Activated CD4-positive, alpha-beta memory T cell treated with anti-CD3 and anti-CD28 coated beads for 36 hours (primary cell): ENCODE measurements at regions of chr20 and their contacts with region 1.

Region 1: GRCh38 chr20:34302723-34303528 is at the start of gene AHCY:
- DNase-seq: peak; percentile 97
- H3K4me3 Mint-ChIP-seq: peak within 1 kb of the TSS; percentile 89
- H3K27ac Mint-ChIP-seq: peak within 1 kb of the TSS; percentile 84
- H3K4me1 Mint-ChIP-seq: peaks cover 22% of the 10 kb centered on the region
- H3K27me3 Mint-ChIP-seq: no peaks in the 10 kb centered on the region
- total RNA-seq, gene AHCY: 160 to 163 TPM

Region 2: GRCh38 chr20:34111702-34112599 is 191.0 kb before region 1 on chr20 and contains the start of gene EIF2S2:
- CTCF ChIA-PET with region 1: no interaction called
- POLR2A ChIA-PET with region 1: interaction called, 5 read pairs
- intact Hi-C with region 1: loop called (anchors 2 kb)
- DNase-seq: peak; percentile 97
- H3K4me3 Mint-ChIP-seq: peak within 1 kb of the TSS; percentile 97
- H3K27ac Mint-ChIP-seq: peak within 1 kb of the TSS; percentile 98
- H3K4me1 Mint-ChIP-seq: peaks cover 41% of the 10 kb centered on the region
- H3K27me3 Mint-ChIP-seq: no peaks in the 10 kb centered on the region
- total RNA-seq, gene EIF2S2: 151 to 155 TPM

Region 3: DNA sequence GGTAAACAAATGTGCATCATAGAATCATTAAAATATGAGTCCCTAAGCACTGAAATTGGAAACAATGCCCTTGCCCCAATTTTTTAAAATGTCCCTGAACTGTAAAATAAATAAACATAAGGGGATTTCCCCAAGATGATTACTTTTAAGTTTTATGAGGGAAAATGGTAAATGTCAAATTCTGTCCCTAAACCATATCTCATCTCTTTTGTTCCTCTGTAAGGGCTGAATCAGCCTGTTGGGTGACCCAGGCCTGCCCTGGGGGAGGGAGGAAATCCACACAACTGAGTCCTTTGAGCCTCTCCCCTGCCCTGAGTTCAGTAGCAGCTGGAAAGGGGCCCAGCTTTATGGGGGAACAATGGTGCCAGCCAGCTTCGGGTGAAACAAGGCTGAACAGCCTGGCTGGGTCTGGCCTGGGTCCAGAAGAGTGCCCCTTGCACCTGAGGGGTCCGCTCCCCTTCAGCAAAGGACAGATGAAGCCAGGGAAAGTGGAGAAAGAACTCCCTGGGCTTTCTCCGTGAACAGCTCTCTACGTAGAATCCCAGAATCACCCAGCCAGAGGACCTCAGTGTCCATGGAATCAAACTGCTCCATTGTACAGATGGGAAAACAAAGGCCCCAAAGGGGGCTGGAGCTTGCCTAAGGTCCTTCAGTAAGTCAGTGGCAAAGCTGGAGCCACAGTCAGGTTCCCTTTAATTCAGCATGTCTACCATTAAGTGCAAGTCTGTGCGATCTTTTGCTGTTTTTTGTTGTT is 31.9 kb after region 1 on chr20:
- CTCF ChIA-PET with region 1: no interaction called
- POLR2A ChIA-PET with region 1: no interaction called
- intact Hi-C with region 1: no loop called
- DNase-seq: no peak
- H3K4me3 Mint-ChIP-seq: no peak overlapping the region
- H3K27ac Mint-ChIP-seq: no peak overlapping the region
- H3K4me1 Mint-ChIP-seq: no peaks in the 10 kb centered on the region
- H3K27me3 Mint-ChIP-seq: no peaks in the 10 kb centered on the region

Region 4: DNA sequence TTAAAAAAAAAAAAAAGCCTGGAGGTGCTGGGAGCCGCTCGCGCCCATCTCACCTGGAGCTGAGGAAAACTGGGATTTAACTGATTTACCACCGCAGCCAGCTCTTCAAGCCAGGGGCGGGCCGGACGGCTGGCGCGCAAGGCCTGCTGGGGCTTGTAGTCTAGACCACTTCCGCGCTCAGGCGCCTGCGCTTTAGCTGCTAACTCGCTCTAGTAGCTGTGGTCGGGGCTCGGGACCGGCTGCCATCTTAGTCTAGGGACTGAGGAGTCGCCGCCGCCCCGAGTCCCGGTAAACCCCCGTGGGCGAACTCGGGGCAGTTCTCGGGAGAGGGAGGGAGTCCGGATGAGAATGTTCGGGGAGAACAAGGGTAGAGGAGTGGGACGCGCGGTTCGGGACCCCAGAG is 60.1 kb after region 1 on chr20 and contains the start of gene ITCH:
- CTCF ChIA-PET with region 1: no interaction called
- POLR2A ChIA-PET with region 1: interaction called, 8 read pairs
- intact Hi-C with region 1: loop called (anchors 1 kb)
- DNase-seq: peak; percentile 96
- H3K4me3 Mint-ChIP-seq: peak within 1 kb of the TSS; percentile 93
- H3K27ac Mint-ChIP-seq: peak within 1 kb of the TSS; percentile 92
- H3K4me1 Mint-ChIP-seq: peaks cover 28% of the 10 kb centered on the region
- H3K27me3 Mint-ChIP-seq: no peaks in the 10 kb centered on the region
- total RNA-seq, gene ITCH: 42.3 to 45.2 TPM

Region 5: GRCh38 chr20:34825530-34826362 is 522.8 kb after region 1 on chr20 and contains the start of gene NCOA6:
- CTCF ChIA-PET with region 1: no interaction called
- POLR2A ChIA-PET with region 1: interaction called, 3 read pairs
- intact Hi-C with region 1: loop called (anchors 1 kb)
- DNase-seq: peak; percentile 91
- H3K4me3 Mint-ChIP-seq: peak within 1 kb of the TSS; percentile 99
- H3K27ac Mint-ChIP-seq: peak within 1 kb of the TSS; percentile 94
- H3K4me1 Mint-ChIP-seq: peaks cover 37% of the 10 kb centered on the region
- H3K27me3 Mint-ChIP-seq: no peaks in the 10 kb centered on the region
- total RNA-seq, gene NCOA6: 19.6 to 20.7 TPM